PC-9 (cell line): ENCODE measurements at regions of chr16 and their contacts with region 1.

Region 1: GRCh38 chr16:56807011-56807675 is 57.9 kb upstream of the SLC12A3 start:
- DNase-seq: peak; percentile 58 to 71
- H3K4me3 ChIP-seq: no peak overlapping the region
- H3K27ac ChIP-seq: peak overlapping the region; percentile 21
- H3K4me1 ChIP-seq: peaks cover 28% of the 10 kb centered on the region
- H3K27me3 ChIP-seq: no peaks in the 10 kb centered on the region
- CTCF ChIP-seq: no peak

Region 2: DNA sequence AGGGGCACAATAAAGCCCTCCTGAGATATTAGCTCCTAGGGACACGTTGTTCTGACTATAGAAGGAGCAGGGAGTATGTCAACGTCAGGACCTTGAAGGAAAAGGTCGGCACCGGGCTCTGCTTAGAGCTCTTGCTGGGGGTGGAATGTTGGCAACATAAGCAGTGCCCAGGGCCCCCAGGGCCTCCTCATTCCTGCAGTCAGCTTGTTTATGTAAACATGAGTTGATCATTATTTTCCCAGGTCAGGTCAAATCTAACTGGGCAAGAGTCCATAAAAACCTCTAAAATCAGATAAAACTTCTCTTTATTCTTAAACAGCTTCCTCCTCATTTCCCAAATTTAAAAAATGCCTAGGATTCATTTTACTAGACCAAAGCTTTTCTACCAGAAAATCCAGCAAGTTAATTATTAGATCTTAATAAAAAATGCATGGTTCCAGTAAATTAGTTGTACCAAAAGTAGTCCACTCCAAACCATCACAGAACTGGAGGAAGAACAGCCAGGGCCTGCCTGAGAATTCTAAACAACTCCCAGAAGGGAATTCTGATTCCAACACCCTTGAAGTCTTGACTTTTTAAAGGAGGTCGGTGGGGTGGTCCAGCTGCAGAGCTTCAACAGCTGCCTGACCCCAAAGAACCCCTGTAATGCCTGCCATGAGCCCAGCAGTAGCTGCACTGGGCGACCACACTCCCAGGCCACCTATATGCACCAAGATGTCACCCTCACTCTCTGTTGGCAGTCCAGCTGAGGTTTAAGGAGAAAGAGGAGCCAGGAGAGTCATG is 436.1 kb before region 1 on chr16:
- CTCF ChIA-PET with region 1: no interaction called
- POLR2A ChIA-PET with region 1: interaction called, 31 read pairs
- intact Hi-C with region 1: no loop called
- DNase-seq: peak; percentile 73 to 92
- H3K4me3 ChIP-seq: no peak overlapping the region
- H3K27ac ChIP-seq: peak overlapping the region; percentile 49
- H3K4me1 ChIP-seq: peaks cover 45% of the 10 kb centered on the region
- H3K27me3 ChIP-seq: no peaks in the 10 kb centered on the region
- CTCF ChIP-seq: no peak